Gastrocnemius medialis (tissue), 4 donors: ENCODE measurements at regions of chr1 and their contacts with region 1.

Region 1: GRCh38 chr1:28505406-28506187 is at the start of gene RCC1:
- DNase-seq: peak; percentile 96 to 98
- ATAC-seq: peak; percentile 96 to 97
- H3K4me3 ChIP-seq: peak within 1 kb of the TSS; percentile 67 to 83 (median 75)
- H3K27ac ChIP-seq: peak within 1 kb of the TSS; percentile 78 to 93 (median 86)
- H3K4me1 ChIP-seq: peaks cover 41 to 48% of the 10 kb centered on the region in 2 donors
- H3K27me3 ChIP-seq: no peaks in the 10 kb centered on the region
- CTCF ChIP-seq: no peak
- POLR2A ChIP-seq: peak; percentile 90 to 94
- total RNA-seq, gene RCC1: 6.1 to 24.5 (median 13.7) TPM

Region 2: DNA sequence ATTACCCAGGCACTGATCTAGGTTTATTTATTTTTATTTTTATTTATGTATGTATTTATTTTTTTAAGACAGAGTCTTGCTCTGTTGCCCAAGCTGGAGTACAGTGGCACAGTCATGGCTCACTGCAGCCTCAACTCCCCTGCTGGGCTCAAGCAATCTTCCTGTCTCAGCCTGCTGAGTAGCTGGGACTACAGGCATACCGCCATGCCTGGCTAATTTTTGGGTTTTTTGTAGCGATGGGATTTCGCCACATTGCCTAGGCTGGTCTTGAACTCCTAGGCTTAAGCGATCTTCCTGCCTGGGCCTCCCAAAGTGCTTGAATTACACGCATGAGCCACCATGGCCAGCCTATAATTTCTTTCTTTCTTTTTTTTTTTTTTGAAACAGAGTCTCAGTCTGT is 126.7 kb before region 1 on chr1:
- in situ Hi-C with region 1: no loop called
- intact Hi-C with region 1: no loop called
- DNase-seq: no peak
- ATAC-seq: no peak
- H3K4me3 ChIP-seq: no peak overlapping the region
- H3K27ac ChIP-seq: no peak overlapping the region
- H3K4me1 ChIP-seq: peaks cover 0 to 5% of the 10 kb centered on the region in 2 donors
- H3K27me3 ChIP-seq: no peaks in the 10 kb centered on the region
- CTCF ChIP-seq: no peak
- POLR2A ChIP-seq: no peak

Region 3: DNA sequence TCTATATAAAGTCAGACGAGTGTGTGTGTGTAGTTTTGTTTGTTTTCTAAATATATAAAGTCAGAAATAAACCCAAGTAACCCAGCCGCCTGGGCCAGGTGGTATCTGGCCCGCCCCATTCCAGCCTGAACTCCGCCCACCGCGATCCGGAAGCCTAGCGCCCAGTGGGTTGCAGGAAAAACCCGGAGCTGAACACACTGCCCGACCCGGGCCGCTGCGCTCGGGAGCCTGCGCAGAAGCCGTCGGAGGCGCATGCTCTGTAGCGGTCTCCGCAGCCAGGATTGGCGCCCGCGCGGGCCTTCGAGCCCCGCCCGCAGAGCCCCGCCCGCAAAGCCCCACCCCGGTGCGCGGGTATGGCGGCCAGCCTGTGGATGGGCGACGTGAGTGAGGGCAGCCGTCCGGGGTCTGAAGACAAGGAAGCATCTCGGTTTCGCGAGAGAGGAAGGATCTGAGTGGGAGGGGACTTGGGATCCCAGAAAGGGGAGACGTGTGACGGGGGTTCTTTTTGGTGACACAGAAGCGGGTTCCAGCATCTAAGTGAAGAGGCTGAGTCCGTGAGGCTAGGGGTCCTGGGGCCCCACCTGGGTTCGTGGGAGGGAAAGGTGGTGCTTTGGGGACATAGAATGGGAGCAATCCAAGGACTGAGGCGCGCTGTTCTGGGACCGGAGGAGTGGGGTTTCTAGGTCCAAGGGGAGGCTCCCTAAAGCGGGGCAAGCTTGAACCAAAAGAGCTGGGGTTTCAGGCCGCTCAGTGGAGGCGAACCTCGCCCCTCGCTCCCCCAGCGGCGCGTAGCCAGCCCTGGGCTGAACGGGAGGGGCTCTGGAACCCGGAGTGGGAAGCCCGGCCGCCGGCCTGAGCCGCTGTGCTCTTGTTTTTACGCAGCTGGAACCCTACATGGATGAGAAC is 47.4 kb after region 1 on chr1 and contains the start of gene TRNAU1AP:
- in situ Hi-C with region 1: loop called in 1 of 4 experiments (anchors 5 kb)
- intact Hi-C with region 1: loop called (anchors 2 kb)
- DNase-seq: peak; percentile 95 to 96
- ATAC-seq: peak; percentile 96
- H3K4me3 ChIP-seq: peak within 1 kb of the TSS; percentile 76 to 81 (median 80)
- H3K27ac ChIP-seq: peak within 1 kb of the TSS; percentile 86 to 93 (median 90)
- H3K4me1 ChIP-seq: peaks cover 8 to 14% of the 10 kb centered on the region in 2 donors
- H3K27me3 ChIP-seq: no peaks in the 10 kb centered on the region
- CTCF ChIP-seq: no peak
- POLR2A ChIP-seq: peak; percentile 80 to 87
- total RNA-seq, gene TRNAU1AP: 5.3 to 19.7 (median 12.0) TPM

Region 4: DNA sequence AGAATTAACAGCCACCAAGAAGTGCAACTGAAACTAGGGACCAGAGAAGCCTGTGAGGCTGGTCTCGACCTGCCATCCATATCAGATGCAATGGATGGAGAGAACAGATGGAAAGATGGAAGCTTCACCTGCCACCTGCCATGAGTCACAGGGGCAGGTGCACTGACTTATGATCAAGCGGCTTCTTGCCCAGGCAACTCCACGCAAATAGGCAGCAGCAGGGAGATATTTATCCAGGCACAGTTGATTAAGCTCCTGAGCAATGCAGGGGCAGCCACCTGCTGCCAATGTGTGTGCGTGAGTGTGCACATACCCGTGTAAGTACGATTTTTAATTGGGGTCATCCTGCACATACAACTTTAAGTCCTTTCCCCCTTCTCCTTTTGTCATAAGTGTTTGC is 904.9 kb after region 1 on chr1:
- in situ Hi-C with region 1: no loop called
- intact Hi-C with region 1: no loop called
- DNase-seq: no peak
- ATAC-seq: no peak
- H3K4me3 ChIP-seq: no peak overlapping the region
- H3K27ac ChIP-seq: no peak overlapping the region
- H3K4me1 ChIP-seq: no peaks in the 10 kb centered on the region
- H3K27me3 ChIP-seq: peaks cover 0 to 3% (median 1%) of the 10 kb centered on the region in 3 donors
- CTCF ChIP-seq: no peak
- POLR2A ChIP-seq: no peak